ENCODE measurements at regions of chr4 and their contacts with region 1.

Region 1: DNA sequence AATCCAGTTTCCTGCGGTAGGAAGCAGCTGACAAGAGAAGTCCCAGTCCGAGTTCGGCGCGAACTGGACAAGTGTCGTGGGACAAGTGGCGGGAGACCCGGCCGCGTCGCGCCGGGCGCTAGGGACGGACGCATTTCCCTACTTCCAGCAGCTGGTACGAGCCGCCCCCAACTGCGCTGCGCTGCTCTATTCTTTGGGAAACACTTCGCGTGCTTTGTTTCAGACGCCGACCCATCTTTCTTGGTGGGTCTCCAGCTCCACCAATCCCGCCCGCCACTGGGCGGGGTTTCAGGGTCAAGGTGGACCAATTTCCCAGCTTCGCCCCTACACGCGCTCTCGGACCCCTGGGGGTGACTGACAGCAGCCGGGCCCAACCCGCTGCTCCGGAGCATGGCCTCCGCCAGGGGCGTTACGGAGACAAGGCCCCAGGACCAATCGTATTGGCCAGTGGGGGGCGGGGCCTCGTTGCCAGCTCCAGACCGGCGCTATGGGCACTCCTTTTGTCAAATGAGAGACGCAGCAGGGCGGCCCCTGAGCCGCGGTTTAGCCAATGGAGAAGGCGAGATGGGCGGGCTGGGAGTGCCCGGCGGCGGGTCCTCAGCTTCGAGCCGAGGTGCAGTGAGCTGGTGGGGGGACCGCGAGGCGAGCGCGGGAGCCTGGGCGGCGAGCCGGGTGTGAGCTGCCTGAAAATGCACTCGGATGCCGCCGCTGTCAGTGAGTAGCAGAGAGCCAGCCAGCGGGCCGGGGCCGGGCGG is at the start of gene DCUN1D4:
- DNase-seq: peak; percentile 100
- H3K4me3 ChIP-seq: peak within 1 kb of the TSS; percentile 74 to 95
- H3K27ac ChIP-seq: peak within 1 kb of the TSS; percentile 94 to 98
- H3K4me1 ChIP-seq: peaks cover 0 to 7% of the 10 kb centered on the region in 2 donors
- H3K27me3 ChIP-seq: no peaks in the 10 kb centered on the region
- CTCF ChIP-seq: peak in 2 of 3 experiments; percentile 38 to 46
- total RNA-seq, gene DCUN1D4: 29.5 TPM

Region 2: GRCh38 chr4:51895813-51896408 is 53.2 kb after region 1 on chr4:
- intact Hi-C with region 1: loop called (anchors 10 kb)
- DNase-seq: peak in 1 of 2 donors; percentile 86
- H3K4me3 ChIP-seq: no peak overlapping the region
- H3K27ac ChIP-seq: no peak overlapping the region
- H3K4me1 ChIP-seq: peaks cover 0 to 9% of the 10 kb centered on the region in 2 donors
- H3K27me3 ChIP-seq: no peaks in the 10 kb centered on the region
- CTCF ChIP-seq: peak; percentile 39 to 76 (median 73)

Region 3: GRCh38 chr4:52038103-52038912 is 195.6 kb after region 1 on chr4 and contains the start of gene SGCB:
- intact Hi-C with region 1: loop called (anchors 5 kb)
- DNase-seq: peak in 1 of 2 donors; percentile 78
- H3K4me3 ChIP-seq: peak within 1 kb of the TSS; percentile 91 to 93
- H3K27ac ChIP-seq: peak within 1 kb of the TSS; percentile 73 to 79
- H3K4me1 ChIP-seq: peaks cover 0 to 16% of the 10 kb centered on the region in 2 donors
- H3K27me3 ChIP-seq: no peaks in the 10 kb centered on the region
- CTCF ChIP-seq: peak in 1 of 3 experiments; percentile 13
- total RNA-seq, gene SGCB: 14.9 TPM

Region 4: GRCh38 chr4:52051619-52052474 is 209.1 kb after region 1 on chr4:
- intact Hi-C with region 1: loop called (anchors 5 kb)
- DNase-seq: peak in 1 of 2 donors; percentile 81
- H3K4me3 ChIP-seq: peak overlapping the region; percentile 65 to 82
- H3K27ac ChIP-seq: peak overlapping the region; percentile 73 to 77
- H3K4me1 ChIP-seq: no peaks in the 10 kb centered on the region
- H3K27me3 ChIP-seq: no peaks in the 10 kb centered on the region
- CTCF ChIP-seq: no peak

Region 5: GRCh38 chr4:52861879-52862616 is 1019.3 kb after region 1 on chr4 and contains the start of gene RASL11B:
- intact Hi-C with region 1: loop called (anchors 5 kb)
- DNase-seq: peak; percentile 20 to 90
- H3K4me3 ChIP-seq: peak within 1 kb of the TSS; percentile 72 to 80
- H3K27ac ChIP-seq: peak within 1 kb of the TSS; percentile 68 to 79
- H3K4me1 ChIP-seq: peaks cover 0 to 17% of the 10 kb centered on the region in 2 donors
- H3K27me3 ChIP-seq: no peaks in the 10 kb centered on the region
- CTCF ChIP-seq: peak in 2 of 3 experiments; percentile 24 to 43
- total RNA-seq, gene RASL11B: not detected

Region 6: DNA sequence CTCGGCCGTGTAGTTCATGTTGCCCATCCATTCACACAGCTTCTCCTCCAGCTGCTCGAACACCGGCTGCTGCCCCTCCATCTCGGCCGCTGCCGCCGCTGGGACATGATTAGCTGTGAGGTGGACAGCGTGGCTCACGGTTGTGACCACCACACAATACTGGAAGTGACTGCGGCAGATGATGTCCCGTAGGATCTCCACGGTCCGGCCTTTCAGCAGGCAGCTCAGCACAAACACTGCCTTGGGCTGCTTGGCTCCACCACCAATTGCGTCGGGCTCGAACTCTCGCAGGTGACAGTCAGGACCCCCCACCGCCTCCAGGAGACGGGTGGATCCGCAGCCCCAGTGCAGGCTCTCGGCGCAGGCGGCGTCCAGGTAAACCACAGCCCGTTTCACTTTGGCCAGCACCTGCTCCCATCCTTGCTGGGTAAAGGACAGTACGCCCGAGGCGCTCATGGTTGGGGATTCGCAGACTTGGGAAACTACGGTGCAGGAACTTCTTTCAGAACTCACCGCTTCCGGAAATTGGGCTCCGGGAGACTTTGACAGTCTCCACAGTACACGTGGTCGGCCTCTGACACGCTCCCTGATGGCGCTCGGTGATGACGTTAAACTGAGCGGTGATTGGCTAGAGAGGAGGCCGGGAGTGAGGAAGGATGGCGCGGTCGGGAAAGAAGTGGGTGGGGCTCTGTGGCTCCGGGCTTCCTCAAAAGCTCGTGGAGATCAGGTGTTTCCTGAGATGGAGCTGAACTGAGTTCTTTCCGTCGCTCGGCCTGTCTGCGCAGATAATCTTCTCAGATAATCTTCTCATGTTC is 1523.0 kb after region 1 on chr4 and contains the start of gene SCFD2:
- intact Hi-C with region 1: loop called (anchors 2 kb)
- DNase-seq: peak; percentile 95 to 99
- H3K4me3 ChIP-seq: peak within 1 kb of the TSS; percentile 69 to 97
- H3K27ac ChIP-seq: peak within 1 kb of the TSS; percentile 30 to 53
- H3K4me1 ChIP-seq: peaks cover 4 to 25% of the 10 kb centered on the region in 2 donors
- H3K27me3 ChIP-seq: no peaks in the 10 kb centered on the region
- CTCF ChIP-seq: no peak
- total RNA-seq, gene SCFD2: 22.8 TPM

Measured in ascending aorta (tissue), 2 donors.